Transverse colon (tissue), 4 donors: ENCODE measurements at regions of chr6 and their contacts with region 1.

Region 1: GRCh38 chr6:134967711-134968110 is 17.8 kb upstream of the ALDH8A1 start:
- DNase-seq: no peak
- H3K4me3 ChIP-seq: no peak overlapping the region
- H3K27ac ChIP-seq: no peak overlapping the region
- H3K4me1 ChIP-seq: no peaks in the 10 kb centered on the region
- H3K27me3 ChIP-seq: no peaks in the 10 kb centered on the region
- CTCF ChIP-seq: no peak
- EP300 ChIP-seq: no peak
- POLR2A ChIP-seq: no peak

Region 2: GRCh38 chr6:134750669-134751068 is 217.0 kb before region 1 on chr6:
- in situ Hi-C with region 1: no loop called
- intact Hi-C with region 1: no loop called
- DNase-seq: no peak
- H3K4me3 ChIP-seq: no peak overlapping the region
- H3K27ac ChIP-seq: no peak overlapping the region
- H3K4me1 ChIP-seq: no peaks in the 10 kb centered on the region
- H3K27me3 ChIP-seq: no peaks in the 10 kb centered on the region
- CTCF ChIP-seq: no peak
- EP300 ChIP-seq: no peak
- POLR2A ChIP-seq: no peak

Region 3: DNA sequence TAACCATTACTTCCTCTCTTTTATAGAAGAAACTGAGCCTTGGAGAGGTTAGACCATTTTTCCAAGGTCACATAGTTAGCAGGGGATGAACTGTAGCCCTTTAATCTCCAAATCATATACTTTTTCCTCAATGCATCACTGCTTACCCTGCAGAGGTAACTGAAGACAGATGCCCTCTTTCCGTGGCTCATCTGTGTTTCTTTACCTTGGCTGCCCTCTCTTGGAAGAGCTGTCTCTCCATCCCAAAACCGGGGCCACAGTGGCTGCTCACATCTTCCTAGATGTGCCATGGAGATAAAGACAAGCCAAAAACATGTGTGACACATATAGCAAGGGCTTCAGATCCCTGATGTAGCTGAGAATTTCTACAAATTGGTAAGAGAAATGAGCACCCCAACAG is 17.2 kb before region 1 on chr6:
- in situ Hi-C with region 1: no loop called
- intact Hi-C with region 1: loop called (anchors 2 kb)
- DNase-seq: no peak
- H3K4me3 ChIP-seq: no peak overlapping the region
- H3K27ac ChIP-seq: no peak overlapping the region
- H3K4me1 ChIP-seq: no peaks in the 10 kb centered on the region
- H3K27me3 ChIP-seq: no peaks in the 10 kb centered on the region
- CTCF ChIP-seq: no peak
- EP300 ChIP-seq: no peak
- POLR2A ChIP-seq: no peak

Region 4: GRCh38 chr6:135114355-135115145 is 146.8 kb after region 1 on chr6:
- in situ Hi-C with region 1: no loop called
- intact Hi-C with region 1: no loop called
- DNase-seq: no peak
- H3K4me3 ChIP-seq: no peak overlapping the region
- H3K27ac ChIP-seq: no peak overlapping the region
- H3K4me1 ChIP-seq: no peaks in the 10 kb centered on the region
- H3K27me3 ChIP-seq: no peaks in the 10 kb centered on the region
- CTCF ChIP-seq: no peak
- EP300 ChIP-seq: no peak
- POLR2A ChIP-seq: no peak